CD4-positive, alpha-beta memory T cell (primary cell): ENCODE measurements at regions of chr10 and their contacts with region 1.

Region 1: DNA sequence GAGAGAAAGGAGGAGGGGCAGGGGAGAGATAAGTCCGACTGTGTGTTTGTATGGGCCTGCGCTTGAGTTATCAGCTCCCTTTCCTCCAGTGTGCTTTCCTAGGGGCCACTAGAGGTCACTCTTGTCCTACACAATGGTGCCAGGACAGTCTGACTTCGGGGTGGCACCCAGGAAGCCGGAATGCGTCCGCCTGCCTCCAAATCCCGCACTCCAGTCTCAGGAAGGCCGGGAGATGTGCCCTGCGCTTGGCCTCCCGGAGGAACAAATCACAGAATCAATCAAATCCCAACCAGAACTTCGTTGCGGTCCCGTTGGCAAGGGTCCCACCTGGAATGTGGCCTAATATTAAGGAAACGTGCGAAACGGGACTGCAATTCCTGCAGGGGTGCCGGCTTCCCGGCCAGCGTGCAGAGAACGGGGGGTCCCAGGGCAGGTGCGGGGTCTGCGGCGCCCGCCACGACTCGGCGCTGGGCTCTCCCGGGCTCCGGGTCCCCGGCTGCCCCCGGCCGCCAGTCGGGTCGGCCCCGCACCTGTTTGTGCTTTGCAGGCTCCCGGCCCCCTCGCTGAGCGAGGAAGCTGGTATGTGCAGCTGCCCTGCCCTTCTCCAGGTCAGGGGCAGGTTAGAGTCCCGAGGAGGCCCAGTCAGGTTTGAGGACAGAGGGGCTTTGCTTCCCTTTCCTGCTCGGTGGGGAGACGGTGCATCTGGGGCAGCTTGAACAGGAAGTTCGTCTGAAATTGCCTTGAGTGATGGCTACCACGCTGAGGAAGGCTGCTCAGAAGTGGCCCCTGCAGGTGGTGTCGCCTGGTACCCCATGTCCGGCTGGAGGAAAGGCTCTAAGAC is 21.0 kb upstream of the HPS1 start:
- DNase-seq: peak; percentile 67 to 72 (median 68)
- H3K4me3 ChIP-seq: peak overlapping the region; percentile 70 to 77
- H3K4me3 Mint-ChIP-seq: peak overlapping the region; percentile 97 to 99 (median 98)
- H3K27ac ChIP-seq: no peak overlapping the region
- H3K27ac Mint-ChIP-seq: peak overlapping the region; percentile 51 to 96 (median 94)
- H3K4me1 ChIP-seq: no peaks in the 10 kb centered on the region
- H3K4me1 Mint-ChIP-seq: peaks cover 2 to 15% (median 5%) of the 10 kb centered on the region in 4 donors
- H3K27me3 ChIP-seq: no peaks in the 10 kb centered on the region
- H3K27me3 Mint-ChIP-seq: peaks cover 4 to 5% of the 10 kb centered on the region in 2 donors

Region 2: DNA sequence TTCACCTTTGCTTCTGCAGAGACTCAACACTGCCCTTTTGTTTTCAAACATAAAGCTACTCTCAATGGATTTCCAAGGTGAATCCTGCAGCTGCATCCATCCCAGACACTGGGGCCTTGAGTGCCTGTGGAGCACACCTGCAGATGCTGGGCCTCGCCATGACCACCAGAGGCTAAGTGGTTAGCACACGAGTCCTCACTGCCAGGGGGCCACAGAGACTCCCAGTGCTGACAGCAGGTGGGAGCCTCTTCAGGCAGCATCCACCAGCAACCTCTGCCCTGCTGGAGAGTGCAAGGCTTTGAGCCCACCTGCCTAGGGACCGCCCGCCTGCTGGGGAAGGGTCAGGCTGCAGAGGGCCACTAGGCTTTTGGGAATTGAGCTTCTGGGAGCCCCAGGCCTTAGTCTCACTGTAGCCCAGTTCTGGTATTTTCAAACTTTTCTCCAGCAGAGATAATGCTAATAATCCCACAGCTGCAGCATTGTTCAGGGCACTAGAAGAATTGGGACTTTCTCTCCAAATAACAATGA is 11.6 kb before region 1 on chr10:
- CTCF ChIA-PET with region 1: interaction called, 12 read pairs
- POLR2A ChIA-PET with region 1: no interaction called
- intact Hi-C with region 1: no loop called
- DNase-seq: no peak
- H3K4me3 ChIP-seq: no peak overlapping the region
- H3K4me3 Mint-ChIP-seq: no peak overlapping the region
- H3K27ac ChIP-seq: no peak overlapping the region
- H3K27ac Mint-ChIP-seq: no peak overlapping the region
- H3K4me1 ChIP-seq: no peaks in the 10 kb centered on the region
- H3K4me1 Mint-ChIP-seq: no peaks in the 10 kb centered on the region
- H3K27me3 ChIP-seq: no peaks in the 10 kb centered on the region
- H3K27me3 Mint-ChIP-seq: peaks cover 21% of the 10 kb centered on the region in 2 donors

Region 3: GRCh38 chr10:98664331-98665042 is 196.8 kb after region 1 on chr10:
- CTCF ChIA-PET with region 1: interaction called, 56 read pairs
- POLR2A ChIA-PET with region 1: interaction called, 6 read pairs
- intact Hi-C with region 1: loop called (anchors 1 kb)
- DNase-seq: peak; percentile 28 to 40 (median 33)
- H3K4me3 ChIP-seq: no peak overlapping the region
- H3K4me3 Mint-ChIP-seq: no peak overlapping the region
- H3K27ac ChIP-seq: no peak overlapping the region
- H3K27ac Mint-ChIP-seq: no peak overlapping the region
- H3K4me1 ChIP-seq: no peaks in the 10 kb centered on the region
- H3K4me1 Mint-ChIP-seq: no peaks in the 10 kb centered on the region
- H3K27me3 ChIP-seq: peaks cover 8% of the 10 kb centered on the region
- H3K27me3 Mint-ChIP-seq: peaks cover 13 to 17% of the 10 kb centered on the region in 2 donors

Region 4: DNA sequence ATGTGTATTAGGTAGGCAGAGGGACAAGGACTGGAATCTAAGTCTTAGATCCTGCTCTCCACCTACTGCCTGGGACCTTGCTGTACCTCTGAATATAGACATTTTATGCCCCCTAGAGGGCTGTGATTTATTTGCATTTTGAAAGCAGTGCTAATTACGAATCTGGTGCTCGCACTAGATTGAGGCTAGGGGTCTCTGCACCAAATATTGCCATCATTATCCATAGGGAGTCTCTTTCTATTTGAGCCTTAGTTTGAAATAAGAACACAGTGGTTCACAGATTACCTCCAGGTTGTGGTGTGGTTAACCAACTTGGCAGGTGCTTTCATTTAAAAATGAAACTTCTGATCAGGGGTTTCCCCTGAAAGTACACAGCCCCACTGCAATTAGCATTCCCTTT is 903.3 kb after region 1 on chr10:
- CTCF ChIA-PET with region 1: no interaction called
- POLR2A ChIA-PET with region 1: no interaction called
- intact Hi-C with region 1: loop called (anchors 5 kb)
- DNase-seq: no peak
- H3K4me3 ChIP-seq: no peak overlapping the region
- H3K4me3 Mint-ChIP-seq: no peak overlapping the region
- H3K27ac ChIP-seq: no peak overlapping the region
- H3K27ac Mint-ChIP-seq: no peak overlapping the region
- H3K4me1 ChIP-seq: peaks cover 6% of the 10 kb centered on the region
- H3K4me1 Mint-ChIP-seq: peaks cover 2 to 8% (median 5%) of the 10 kb centered on the region in 4 donors
- H3K27me3 ChIP-seq: no peaks in the 10 kb centered on the region
- H3K27me3 Mint-ChIP-seq: peaks cover 12 to 34% of the 10 kb centered on the region in 2 donors

Region 5: GRCh38 chr10:99430451-99431189 is 962.9 kb after region 1 on chr10 and contains the start of gene GOT1:
- CTCF ChIA-PET with region 1: no interaction called
- POLR2A ChIA-PET with region 1: no interaction called
- intact Hi-C with region 1: loop called (anchors 10 kb)
- DNase-seq: peak; percentile 93 to 97 (median 95)
- H3K4me3 ChIP-seq: peak within 1 kb of the TSS; percentile 88 to 96
- H3K4me3 Mint-ChIP-seq: peak within 1 kb of the TSS; percentile 96 to 99 (median 97)
- H3K27ac ChIP-seq: peak within 1 kb of the TSS; percentile 76
- H3K27ac Mint-ChIP-seq: peak within 1 kb of the TSS; percentile 91 to 99 (median 98)
- H3K4me1 ChIP-seq: peaks cover 21% of the 10 kb centered on the region
- H3K4me1 Mint-ChIP-seq: peaks cover 20 to 45% (median 34%) of the 10 kb centered on the region in 4 donors
- H3K27me3 ChIP-seq: no peaks in the 10 kb centered on the region
- H3K27me3 Mint-ChIP-seq: peaks cover 0 to 2% of the 10 kb centered on the region in 2 donors
- total RNA-seq, gene GOT1: 10.3 to 10.4 TPM